Dorsolateral prefrontal cortex (tissue), 120 donors: ENCODE measurements at regions of chr6 and their contacts with region 1.

Region 1: GRCh38 chr6:75934643-75935472 is 137.6 kb downstream of the IMPG1 start:
- DNase-seq: peak in 7 of 10 donors; percentile 20 to 58 (median 40)
- H3K4me3 ChIP-seq: peak overlapping the region; percentile 33 to 75 (median 54)
- H3K27ac ChIP-seq: peak overlapping the region in 7 of 59 donors; percentile 4 to 74 (median 44)
- H3K27me3 ChIP-seq: no peaks in the 10 kb centered on the region
- CTCF ChIP-seq: peak; percentile 43 to 88 (median 78)

Region 2: GRCh38 chr6:76682842-76683241 is 748.0 kb after region 1 on chr6:
- intact Hi-C with region 1: loop called in 1 of 2 experiments (anchors 10 kb)
- DNase-seq: no peak
- H3K4me3 ChIP-seq: no peak overlapping the region
- H3K27ac ChIP-seq: no peak overlapping the region
- H3K27me3 ChIP-seq: no peaks in the 10 kb centered on the region
- CTCF ChIP-seq: peak in 54 of 56 donors; percentile 14 to 65 (median 45)

Region 3: DNA sequence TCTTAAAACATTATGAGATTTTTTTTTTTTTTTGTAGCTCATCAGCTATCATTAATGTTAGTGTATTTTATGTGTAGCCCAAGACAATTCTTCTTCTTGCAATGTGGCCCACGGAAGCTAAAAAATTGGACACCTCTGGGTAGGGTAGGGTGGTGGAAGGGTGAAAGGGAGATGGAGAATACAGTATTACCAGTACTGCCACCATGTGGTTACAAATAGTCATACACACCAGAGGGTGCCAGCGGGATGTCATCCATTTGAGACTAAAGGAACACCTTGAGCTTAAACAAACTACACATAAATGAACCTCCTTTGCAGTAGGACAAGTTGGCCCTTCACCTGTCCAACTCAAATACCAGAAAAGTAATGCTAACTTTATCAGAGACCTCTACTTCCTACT is 926.5 kb after region 1 on chr6:
- intact Hi-C with region 1: loop called in 1 of 2 experiments (anchors 5 kb)
- DNase-seq: no peak
- H3K4me3 ChIP-seq: no peak overlapping the region
- H3K27ac ChIP-seq: no peak overlapping the region
- H3K27me3 ChIP-seq: no peaks in the 10 kb centered on the region
- CTCF ChIP-seq: peak in 36 of 56 donors; percentile 6 to 39 (median 22)

Region 4: DNA sequence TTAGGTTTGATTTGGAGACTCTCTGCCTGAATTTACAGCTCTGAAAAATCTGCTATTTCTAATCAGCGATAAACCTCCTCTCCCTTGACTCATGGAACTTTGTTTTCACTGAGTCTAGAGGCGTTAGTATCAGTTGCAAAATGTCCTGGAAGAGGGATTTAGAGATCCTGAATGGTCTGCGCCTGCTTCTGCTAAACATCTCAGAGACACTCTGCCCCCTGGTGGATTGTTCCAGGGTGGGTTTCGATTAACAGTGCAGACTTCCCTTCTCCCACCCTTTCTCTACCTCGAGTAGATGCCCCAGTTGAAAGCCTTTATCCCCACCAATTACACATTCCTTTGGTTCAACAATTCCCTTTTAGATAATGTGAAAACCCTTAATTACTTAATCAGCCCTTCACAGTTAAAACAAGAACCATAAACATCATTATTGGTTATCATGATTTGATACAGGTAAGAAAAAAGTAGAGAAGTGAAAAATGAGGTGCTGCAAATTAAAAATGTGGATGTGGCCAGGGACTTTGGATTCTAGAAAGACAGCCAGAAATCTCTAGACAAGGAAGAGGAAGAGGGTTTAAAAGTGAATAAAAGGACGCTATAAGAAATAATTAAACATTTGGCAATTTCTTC is 1523.0 kb after region 1 on chr6:
- intact Hi-C with region 1: loop called (anchors 2 to 5 kb)
- DNase-seq: peak in 9 of 10 donors; percentile 25 to 83 (median 62)
- H3K4me3 ChIP-seq: no peak overlapping the region
- H3K27ac ChIP-seq: peak overlapping the region in 4 of 59 donors; percentile 11 to 51 (median 24)
- H3K27me3 ChIP-seq: peaks cover 0 to 30% (median 12%) of the 10 kb centered on the region in 45 donors
- CTCF ChIP-seq: peak; percentile 59 to 86 (median 74)